Left colon (tissue), 2 donors: ENCODE measurements at regions of chr2 and their contacts with region 1.

Region 1: GRCh38 chr2:37389989-37390765 is 45.7 kb downstream of the QPCT start:
- DNase-seq: peak in 1 of 2 donors; percentile 35
- ATAC-seq: peak; percentile 48

Region 2: DNA sequence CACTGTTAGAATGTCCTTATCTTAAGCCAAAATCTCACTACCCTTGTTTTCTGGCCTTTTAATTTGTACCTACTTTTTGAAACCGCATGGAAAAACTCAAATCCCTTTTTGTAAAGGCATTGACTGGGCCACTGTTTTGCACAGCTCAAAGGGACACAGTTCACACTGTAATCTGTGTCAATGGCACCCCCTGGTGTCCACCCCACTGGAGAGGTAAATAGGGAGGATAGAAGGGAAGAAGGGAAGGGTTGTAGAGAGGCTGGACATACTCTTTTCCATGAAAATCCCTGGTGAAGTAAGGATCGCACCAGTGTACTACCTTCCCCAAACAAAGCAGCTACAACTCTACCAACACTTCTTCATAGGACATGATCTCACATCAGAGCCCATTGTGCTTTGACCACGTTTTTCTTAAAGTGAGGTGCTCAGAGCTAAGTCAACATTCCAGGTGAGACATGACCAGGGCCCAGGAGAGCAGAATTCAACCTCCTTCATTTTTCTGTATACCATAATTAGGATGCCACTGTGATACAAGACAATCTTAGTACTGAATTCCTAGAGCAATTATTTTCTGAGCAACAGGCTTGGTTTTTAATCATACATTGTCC is 442.5 kb after region 1 on chr2:
- intact Hi-C with region 1: loop called in 1 of 2 experiments (anchors 5 kb)
- DNase-seq: peak; percentile 79 to 98
- ATAC-seq: peak; percentile 100

Region 3: GRCh38 chr2:37877457-37878315 is 487.5 kb after region 1 on chr2:
- intact Hi-C with region 1: loop called in 1 of 2 experiments (anchors 5 kb)
- DNase-seq: no peak
- ATAC-seq: peak; percentile 77

Region 4: GRCh38 chr2:38274286-38275276 is 884.4 kb after region 1 on chr2:
- intact Hi-C with region 1: loop called in 1 of 2 experiments (anchors 10 kb)
- DNase-seq: no peak
- ATAC-seq: peak; percentile 77